Transverse colon (tissue), 4 donors: ENCODE measurements at regions of chr21 and their contacts with region 1.

Region 1: DNA sequence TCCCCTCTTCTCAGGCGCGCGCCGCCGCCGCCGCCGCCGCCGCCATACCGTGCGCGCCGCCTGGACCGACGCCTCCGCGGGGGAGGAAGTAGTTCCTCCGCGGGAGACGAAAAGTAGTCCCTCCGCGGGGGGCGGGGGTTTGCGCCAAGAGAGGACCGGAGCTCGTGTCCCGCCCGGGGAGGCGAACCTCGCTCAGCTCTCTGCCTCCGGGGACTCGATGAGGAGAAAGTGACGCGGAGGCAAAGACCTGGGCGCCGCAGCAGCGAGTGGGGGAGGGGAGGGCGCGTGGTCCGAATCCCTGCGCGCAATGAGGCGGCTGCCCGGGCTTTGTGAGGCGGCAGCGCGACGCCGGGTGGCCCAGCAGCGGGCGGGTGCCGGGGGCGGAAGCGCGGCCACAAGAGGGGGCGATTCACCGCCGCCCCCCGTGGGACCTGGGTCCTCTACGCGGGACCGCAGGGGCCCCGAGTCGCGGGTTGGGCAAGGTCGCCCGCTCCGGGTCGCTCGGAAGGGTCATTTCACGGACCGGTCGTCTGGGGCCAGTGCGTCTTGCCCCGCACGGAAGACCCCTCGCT is at the start of gene BRWD1:
- DNase-seq: peak; percentile 80
- H3K4me3 ChIP-seq: peak within 1 kb of the TSS; percentile 59 to 98 (median 67)
- H3K27ac ChIP-seq: peak within 1 kb of the TSS; percentile 94 to 98 (median 95)
- H3K4me1 ChIP-seq: peaks cover 6 to 29% (median 19%) of the 10 kb centered on the region in 4 donors
- H3K27me3 ChIP-seq: no peaks in the 10 kb centered on the region
- CTCF ChIP-seq: peak in 3 of 5 experiments; percentile 19 to 51 (median 24)
- EP300 ChIP-seq: peak; percentile 37
- POLR2A ChIP-seq: peak; percentile 86
- total RNA-seq, gene BRWD1: 63.8 to 281 (median 103) TPM

Region 2: DNA sequence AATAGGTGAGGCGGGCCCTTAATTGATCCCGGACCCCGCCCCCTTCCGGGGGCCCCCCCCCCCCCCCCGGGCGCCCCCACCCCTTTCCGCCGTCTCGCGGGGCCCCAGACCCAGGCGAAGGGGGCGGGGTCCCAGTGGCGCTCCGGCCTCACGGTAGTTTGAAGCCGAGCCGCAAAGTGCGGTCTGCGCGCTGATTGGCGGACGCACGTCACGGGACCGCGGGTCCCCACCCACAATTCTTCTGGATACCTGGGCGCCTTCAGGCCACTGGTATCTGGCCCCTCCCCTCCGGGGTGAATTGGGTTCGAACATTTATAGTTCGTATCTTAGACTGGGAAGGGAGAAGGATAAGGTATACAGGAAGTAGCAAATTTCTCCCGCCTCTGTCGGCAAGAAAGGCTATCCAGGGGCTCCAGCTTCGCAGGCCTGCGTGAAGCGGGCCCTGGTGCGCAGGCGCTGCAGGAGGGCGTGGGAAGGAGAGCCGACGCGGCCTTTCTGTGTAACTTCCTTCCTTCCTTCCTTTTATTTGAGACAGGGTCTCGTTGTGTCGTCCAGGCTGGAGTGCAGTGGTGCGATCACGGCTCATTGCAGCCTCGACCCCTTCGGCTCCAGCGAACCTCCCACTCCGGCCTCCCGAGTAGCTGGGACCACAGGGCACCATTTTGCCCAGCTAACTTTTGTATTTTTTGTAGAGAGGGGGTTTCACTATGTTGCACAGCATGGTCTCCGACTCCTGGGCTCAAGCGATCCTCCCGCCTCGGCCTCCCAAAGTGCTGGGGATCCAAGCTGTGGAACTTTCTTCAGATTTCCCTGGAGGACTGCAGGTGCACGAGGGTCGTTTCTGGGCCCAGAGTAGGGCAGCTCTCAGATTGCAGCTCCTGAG is 35.8 kb after region 1 on chr21:
- in situ Hi-C with region 1: no loop called
- intact Hi-C with region 1: loop called (anchors 1 kb)
- DNase-seq: peak; percentile 98
- H3K4me3 ChIP-seq: peak overlapping the region; percentile 46 to 87 (median 66)
- H3K27ac ChIP-seq: peak overlapping the region; percentile 94 to 98 (median 96)
- H3K4me1 ChIP-seq: peaks cover 12 to 37% (median 25%) of the 10 kb centered on the region in 4 donors
- H3K27me3 ChIP-seq: no peaks in the 10 kb centered on the region
- CTCF ChIP-seq: no peak
- EP300 ChIP-seq: no peak
- POLR2A ChIP-seq: peak; percentile 77